ENCODE measurements at regions of chr2 and their contacts with region 1.

Region 1: DNA sequence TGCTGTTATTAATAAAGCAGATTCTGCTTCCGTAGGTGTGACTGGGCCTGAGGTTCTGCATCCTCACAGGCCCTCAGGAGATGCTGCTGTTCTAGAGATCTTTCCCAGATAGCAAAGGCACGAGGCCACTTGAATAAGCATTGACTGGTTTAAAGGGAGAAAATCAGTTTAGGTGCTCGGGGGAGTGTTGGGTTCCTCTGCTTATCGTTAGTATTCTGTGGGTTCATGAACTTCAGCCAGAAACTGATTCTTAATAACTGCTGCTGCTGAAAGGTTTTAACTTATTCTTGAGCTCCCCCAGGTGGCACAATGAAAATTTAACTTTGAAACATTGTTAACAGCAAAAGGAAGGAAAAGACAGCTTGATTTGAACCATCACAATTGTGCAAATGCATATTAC is 56.9 kb downstream of the ITGA6 start:
- DNase-seq: no peak
- ATAC-seq: peak; percentile 37
- H3K4me3 Mint-ChIP-seq: no peak overlapping the region
- H3K27ac Mint-ChIP-seq: no peak overlapping the region
- H3K4me1 Mint-ChIP-seq: peaks cover 44% of the 10 kb centered on the region
- H3K27me3 Mint-ChIP-seq: no peaks in the 10 kb centered on the region

Region 2: GRCh38 chr2:171703574-171704347 is 780.5 kb before region 1 on chr2:
- CTCF ChIA-PET with region 1: interaction called, 4 read pairs
- POLR2A ChIA-PET with region 1: no interaction called
- intact Hi-C with region 1: loop called in 1 of 2 experiments (anchors 5 kb)
- DNase-seq: no peak
- ATAC-seq: no peak
- H3K4me3 Mint-ChIP-seq: no peak overlapping the region
- H3K27ac Mint-ChIP-seq: no peak overlapping the region
- H3K4me1 Mint-ChIP-seq: peaks cover 8% of the 10 kb centered on the region
- H3K27me3 Mint-ChIP-seq: no peaks in the 10 kb centered on the region

Region 3: DNA sequence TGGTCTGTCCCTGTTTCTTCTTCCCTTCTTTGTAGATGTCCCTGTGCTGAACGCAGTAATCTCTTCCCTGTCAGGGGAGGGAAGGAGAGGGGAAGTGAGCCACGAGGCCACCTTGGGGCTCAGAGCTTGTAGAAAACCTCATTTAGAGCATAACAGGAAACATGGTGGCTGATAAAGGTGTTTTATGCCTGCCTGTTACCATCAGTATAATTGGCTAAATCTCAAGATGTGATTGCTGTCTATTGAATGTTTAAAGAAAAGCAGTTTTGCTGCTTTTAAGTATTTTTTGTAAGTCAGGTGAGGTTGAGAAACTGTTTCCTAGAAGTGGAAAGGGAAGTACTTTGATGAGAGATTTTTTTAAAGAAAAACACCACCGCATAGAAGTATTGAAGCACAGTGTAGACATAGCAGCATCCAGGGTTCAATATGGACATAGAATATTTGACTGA is 11.9 kb after region 1 on chr2:
- CTCF ChIA-PET with region 1: interaction called, 13 read pairs
- POLR2A ChIA-PET with region 1: no interaction called
- intact Hi-C with region 1: no loop called
- DNase-seq: peak; percentile 23
- ATAC-seq: peak; percentile 74
- H3K4me3 Mint-ChIP-seq: peak overlapping the region; percentile 38
- H3K27ac Mint-ChIP-seq: peak overlapping the region; percentile 95
- H3K4me1 Mint-ChIP-seq: peaks cover 64% of the 10 kb centered on the region
- H3K27me3 Mint-ChIP-seq: no peaks in the 10 kb centered on the region

Region 4: GRCh38 chr2:172698041-172698863 is 214.0 kb after region 1 on chr2:
- CTCF ChIA-PET with region 1: no interaction called
- POLR2A ChIA-PET with region 1: no interaction called
- intact Hi-C with region 1: loop called in 1 of 2 experiments (anchors 10 kb)
- DNase-seq: peak; percentile 22
- ATAC-seq: peak; percentile 95
- H3K4me3 Mint-ChIP-seq: no peak overlapping the region
- H3K27ac Mint-ChIP-seq: no peak overlapping the region
- H3K4me1 Mint-ChIP-seq: peaks cover 28% of the 10 kb centered on the region
- H3K27me3 Mint-ChIP-seq: no peaks in the 10 kb centered on the region

Region 5: DNA sequence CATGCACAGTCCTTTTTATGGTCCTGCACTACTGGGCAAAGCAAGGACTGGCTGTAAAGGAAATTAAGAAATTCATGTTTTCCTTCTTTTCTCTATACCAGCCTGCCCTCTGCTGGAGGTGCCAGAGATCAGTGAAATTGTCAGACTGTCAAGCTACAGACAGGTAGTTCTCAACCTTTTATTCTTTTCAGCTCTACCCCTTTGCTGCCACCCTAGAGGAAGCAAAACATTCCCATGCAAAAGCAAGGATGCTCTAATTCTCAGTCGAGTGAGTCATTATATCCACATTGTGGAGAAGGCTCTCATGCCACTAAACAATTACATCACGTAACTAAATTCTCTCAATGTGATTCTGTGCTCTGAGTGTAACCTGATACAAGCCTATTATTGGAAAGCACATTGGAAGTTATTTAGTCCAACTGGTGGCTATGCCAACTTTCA is 226.4 kb after region 1 on chr2:
- CTCF ChIA-PET with region 1: no interaction called
- POLR2A ChIA-PET with region 1: no interaction called
- intact Hi-C with region 1: loop called in 1 of 2 experiments (anchors 5 kb)
- DNase-seq: peak; percentile 62
- ATAC-seq: no peak
- H3K4me3 Mint-ChIP-seq: no peak overlapping the region
- H3K27ac Mint-ChIP-seq: no peak overlapping the region
- H3K4me1 Mint-ChIP-seq: no peaks in the 10 kb centered on the region
- H3K27me3 Mint-ChIP-seq: peaks cover 5% of the 10 kb centered on the region